Aorta (tissue), 5 donors: ENCODE measurements at regions of chr15 and their contacts with region 1.

Region 1: DNA sequence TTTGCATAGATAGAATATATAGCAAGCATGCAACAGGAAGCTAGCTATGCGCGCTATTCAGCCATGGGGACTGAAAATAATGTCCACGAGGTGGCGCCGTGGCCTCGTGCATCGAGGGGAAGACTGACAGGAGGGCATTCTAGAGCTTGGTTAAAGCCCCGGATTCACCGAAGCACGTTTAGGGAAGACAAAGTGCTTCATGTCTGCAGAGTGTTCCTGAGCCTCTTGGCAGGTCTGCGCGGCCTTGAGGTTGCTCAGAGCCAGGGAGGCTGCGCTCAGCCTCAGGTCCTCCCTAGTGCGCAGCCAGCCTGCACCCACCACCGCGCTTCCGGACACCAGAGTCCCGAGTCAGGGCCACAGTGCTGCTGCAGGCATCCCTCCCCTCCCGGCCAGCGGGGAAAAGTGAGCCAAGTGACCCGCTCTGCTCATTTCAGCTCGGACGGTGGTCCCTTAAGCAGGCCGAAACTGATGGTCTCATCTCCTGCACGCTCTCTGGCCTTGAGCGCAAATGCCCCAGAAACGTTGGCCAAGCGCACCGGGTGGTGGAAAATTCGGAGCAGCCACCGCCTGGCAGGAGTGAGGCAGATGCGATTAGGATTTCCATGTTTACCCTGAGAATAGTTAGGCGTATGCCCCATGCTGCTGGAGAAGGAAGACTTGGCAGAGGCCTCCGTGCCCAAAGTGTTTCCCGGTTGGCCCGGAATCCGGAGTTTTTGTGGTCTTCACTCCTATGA is 24.8 kb downstream of the GABRA5 start:
- DNase-seq: peak in 1 of 2 donors; percentile 80
- ATAC-seq: no peak
- H3K4me3 ChIP-seq: no peak overlapping the region
- H3K27ac ChIP-seq: no peak overlapping the region
- H3K4me1 ChIP-seq: no peaks in the 10 kb centered on the region
- H3K27me3 ChIP-seq: no peaks in the 10 kb centered on the region

Region 2: GRCh38 chr15:26910715-26911114 is 19.1 kb after region 1 on chr15:
- intact Hi-C with region 1: no loop called
- DNase-seq: no peak
- ATAC-seq: no peak
- H3K4me3 ChIP-seq: no peak overlapping the region
- H3K27ac ChIP-seq: no peak overlapping the region
- H3K4me1 ChIP-seq: no peaks in the 10 kb centered on the region
- H3K27me3 ChIP-seq: no peaks in the 10 kb centered on the region

Region 3: GRCh38 chr15:27017168-27017809 is 125.7 kb after region 1 on chr15:
- intact Hi-C with region 1: loop called in 1 of 2 experiments (anchors 5 kb)
- DNase-seq: no peak
- ATAC-seq: no peak
- H3K4me3 ChIP-seq: no peak overlapping the region
- H3K27ac ChIP-seq: no peak overlapping the region
- H3K4me1 ChIP-seq: no peaks in the 10 kb centered on the region
- H3K27me3 ChIP-seq: no peaks in the 10 kb centered on the region